Prostate gland (tissue), 2 donors: ENCODE measurements at regions of chr9 and their contacts with region 1.

Region 1: DNA sequence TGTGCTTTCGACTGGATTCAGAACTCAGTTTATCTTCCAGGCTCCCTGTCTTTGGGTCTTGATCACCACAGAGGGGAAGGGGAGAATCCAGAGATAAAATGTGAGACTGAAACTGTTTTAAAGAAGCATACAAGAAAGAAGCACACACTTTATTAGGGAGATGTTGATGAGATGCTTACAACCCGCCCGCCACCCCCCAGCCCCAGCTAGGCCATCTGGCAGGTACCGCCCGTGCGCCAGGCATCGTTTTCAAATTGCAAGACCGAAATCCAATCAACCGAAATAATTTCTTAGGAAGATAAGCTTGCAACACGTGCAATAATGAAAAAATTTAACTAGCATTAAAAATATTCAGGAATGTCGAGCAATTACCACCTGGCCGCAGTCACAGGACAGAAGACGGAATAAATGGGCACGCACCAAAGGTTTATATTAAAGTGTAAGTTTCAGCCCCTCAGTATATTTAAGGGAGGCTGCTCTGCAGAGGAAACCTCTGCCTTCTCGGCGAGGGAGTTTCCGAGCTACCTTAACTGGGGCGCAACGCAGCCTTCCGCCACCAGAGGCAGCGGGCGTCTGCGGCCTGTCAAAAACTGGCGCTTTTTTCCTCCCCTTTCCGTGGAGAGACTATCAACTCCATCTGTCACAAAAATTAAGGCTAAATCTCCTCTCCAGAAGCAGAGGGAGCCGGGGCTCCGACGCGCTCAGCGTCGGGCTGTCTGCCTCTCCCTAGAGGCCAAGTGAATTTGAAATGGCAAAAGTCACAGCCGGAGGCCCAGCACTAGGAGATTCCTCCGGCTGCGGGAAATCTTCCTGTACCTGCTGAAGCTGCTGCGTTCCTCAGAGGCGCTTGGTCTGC is 996 bp upstream of the GAS1 start:
- DNase-seq: peak; percentile 77
- H3K4me3 ChIP-seq: peak overlapping the region; percentile 71 to 80
- H3K27ac ChIP-seq: peak overlapping the region; percentile 76 to 95
- H3K4me1 ChIP-seq: peaks cover 5% of the 10 kb centered on the region
- H3K27me3 ChIP-seq: no peaks in the 10 kb centered on the region
- CTCF ChIP-seq: peak; percentile 68 to 86 (median 80)
- POLR2A ChIP-seq: no peak

Region 2: DNA sequence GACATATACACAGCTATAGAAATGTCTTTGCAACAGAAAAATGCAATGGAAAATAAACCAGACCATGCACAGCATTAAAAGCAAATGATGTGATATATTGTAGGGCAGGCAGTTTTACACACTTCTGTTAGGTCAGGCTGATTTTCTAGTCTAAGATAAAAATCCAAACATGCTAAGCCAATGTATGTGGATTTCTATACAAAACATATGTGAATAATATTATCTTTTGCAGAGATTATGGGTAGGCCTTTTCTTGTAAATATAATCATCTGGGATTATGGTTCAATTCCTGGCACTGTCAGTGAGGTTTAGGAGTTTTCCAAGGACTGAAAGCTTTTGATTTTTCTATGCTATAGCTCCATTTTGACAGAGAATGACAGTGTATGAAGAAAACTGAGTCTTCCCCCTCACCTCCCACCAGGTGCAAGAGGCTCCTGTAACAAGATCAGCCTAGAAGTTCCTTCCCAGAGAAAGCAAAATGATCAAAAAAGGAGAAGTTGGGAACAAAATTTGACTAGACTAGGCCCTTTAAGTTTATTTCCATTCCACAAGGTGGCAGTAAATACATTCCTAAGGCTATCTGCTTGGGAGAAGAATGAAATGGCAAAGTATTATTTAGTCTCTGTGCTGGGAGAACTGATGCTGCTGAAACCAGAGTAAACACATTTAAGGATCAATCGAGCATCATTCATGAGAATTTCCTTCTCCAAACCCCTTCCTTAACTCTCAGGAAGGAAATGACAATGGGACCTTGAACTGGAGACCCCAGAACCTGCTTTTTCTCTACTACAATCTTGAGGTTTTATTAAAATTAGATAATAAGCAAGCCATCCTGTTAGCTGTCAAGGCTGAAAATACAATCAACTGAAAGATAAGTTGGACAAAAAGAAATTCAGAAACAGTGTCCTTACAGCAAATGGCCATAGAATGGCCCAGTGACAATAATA is 461.1 kb before region 1 on chr9:
- intact Hi-C with region 1: loop called (anchors 2 kb)
- DNase-seq: no peak
- H3K4me3 ChIP-seq: no peak overlapping the region
- H3K27ac ChIP-seq: no peak overlapping the region
- H3K4me1 ChIP-seq: no peaks in the 10 kb centered on the region
- H3K27me3 ChIP-seq: no peaks in the 10 kb centered on the region
- CTCF ChIP-seq: peak; percentile 33 to 77 (median 68)
- POLR2A ChIP-seq: no peak

Region 3: DNA sequence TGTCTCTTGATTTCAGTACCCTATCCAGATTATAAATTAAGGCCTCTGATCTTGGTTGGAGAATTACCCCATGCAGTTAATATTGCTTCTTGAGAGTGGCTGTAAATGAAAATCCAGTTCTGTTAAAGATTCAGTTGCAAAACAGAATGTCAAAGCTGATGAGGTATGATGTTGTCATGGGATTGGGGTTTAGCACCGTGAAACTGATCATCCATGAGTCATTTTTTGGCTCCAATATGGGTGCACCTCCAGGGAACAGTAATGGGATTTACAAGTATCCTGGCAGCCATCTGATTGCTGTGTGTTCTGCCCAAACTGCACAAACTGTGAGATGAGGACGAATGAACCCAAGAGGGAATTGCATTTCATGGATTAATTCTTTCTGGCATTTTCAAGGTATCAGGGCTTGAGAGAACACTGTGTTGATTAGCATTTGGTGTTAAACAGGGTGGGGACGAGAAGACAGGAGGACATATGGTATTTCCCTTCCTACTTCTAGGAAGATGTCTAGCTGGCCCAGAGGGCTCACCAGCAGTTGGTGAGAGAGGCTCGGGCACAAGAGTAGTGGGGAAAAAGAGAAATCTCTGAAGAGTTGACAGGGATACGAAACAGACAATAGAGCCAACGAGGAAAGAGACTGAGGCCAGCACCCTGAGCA is 215.7 kb before region 1 on chr9:
- intact Hi-C with region 1: loop called (anchors 10 kb)
- DNase-seq: no peak
- H3K4me3 ChIP-seq: no peak overlapping the region
- H3K27ac ChIP-seq: no peak overlapping the region
- H3K4me1 ChIP-seq: no peaks in the 10 kb centered on the region
- H3K27me3 ChIP-seq: no peaks in the 10 kb centered on the region
- CTCF ChIP-seq: no peak
- POLR2A ChIP-seq: no peak

Region 4: DNA sequence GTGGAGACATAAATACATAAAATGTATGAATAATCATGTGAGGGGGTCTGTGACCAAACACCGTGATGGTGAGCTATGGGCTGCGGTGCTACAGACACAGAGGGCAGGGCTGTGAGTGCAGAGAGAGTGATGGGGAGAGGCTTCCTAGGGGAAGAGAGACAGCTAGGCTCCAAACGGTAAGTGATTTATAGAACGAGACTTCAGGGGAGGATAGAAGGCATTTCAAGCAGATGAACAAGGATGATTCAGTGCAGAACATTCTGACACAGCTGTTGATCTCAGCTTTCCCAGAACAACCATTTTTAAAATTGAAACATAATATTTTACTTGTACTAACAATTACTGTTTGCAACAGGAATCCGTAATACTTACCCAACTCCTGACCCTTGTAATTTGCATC is 101.6 kb before region 1 on chr9:
- intact Hi-C with region 1: no loop called
- DNase-seq: no peak
- H3K4me3 ChIP-seq: no peak overlapping the region
- H3K27ac ChIP-seq: no peak overlapping the region
- H3K4me1 ChIP-seq: no peaks in the 10 kb centered on the region
- H3K27me3 ChIP-seq: no peaks in the 10 kb centered on the region
- CTCF ChIP-seq: no peak
- POLR2A ChIP-seq: no peak

Region 5: DNA sequence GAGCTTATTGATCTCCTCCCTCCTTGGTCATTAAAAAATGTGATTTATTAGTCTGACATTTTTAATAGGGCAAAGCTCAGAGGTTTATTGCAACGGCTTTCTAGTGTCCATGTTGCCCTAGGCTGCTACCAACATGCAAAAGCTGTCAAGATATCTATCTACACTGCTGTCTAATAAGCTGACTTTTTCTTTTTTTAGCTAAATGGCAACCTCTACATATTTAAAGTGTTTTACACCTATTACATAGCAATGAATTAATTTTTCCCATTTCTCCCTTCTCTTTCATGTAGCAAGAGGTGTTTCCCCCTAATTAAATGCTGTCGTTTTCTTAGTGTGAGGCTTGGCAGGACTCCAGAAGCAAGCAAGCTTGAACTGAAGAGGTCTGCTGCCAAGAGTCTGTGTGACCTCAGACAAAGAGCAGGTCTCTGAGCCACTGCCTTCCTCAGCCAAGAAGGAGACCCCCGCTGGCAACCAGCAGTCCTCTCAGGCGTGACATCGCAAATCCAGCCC is 80.4 kb before region 1 on chr9:
- intact Hi-C with region 1: no loop called
- DNase-seq: no peak
- H3K4me3 ChIP-seq: no peak overlapping the region
- H3K27ac ChIP-seq: no peak overlapping the region
- H3K4me1 ChIP-seq: no peaks in the 10 kb centered on the region
- H3K27me3 ChIP-seq: no peaks in the 10 kb centered on the region
- CTCF ChIP-seq: no peak
- POLR2A ChIP-seq: no peak

Region 6: GRCh38 chr9:86997158-86997557 is 48.9 kb after region 1 on chr9:
- intact Hi-C with region 1: no loop called
- DNase-seq: no peak
- H3K4me3 ChIP-seq: no peak overlapping the region
- H3K27ac ChIP-seq: no peak overlapping the region
- H3K4me1 ChIP-seq: no peaks in the 10 kb centered on the region
- H3K27me3 ChIP-seq: no peaks in the 10 kb centered on the region
- CTCF ChIP-seq: peak in 2 of 4 experiments; percentile 4 to 27
- POLR2A ChIP-seq: no peak

Region 7: DNA sequence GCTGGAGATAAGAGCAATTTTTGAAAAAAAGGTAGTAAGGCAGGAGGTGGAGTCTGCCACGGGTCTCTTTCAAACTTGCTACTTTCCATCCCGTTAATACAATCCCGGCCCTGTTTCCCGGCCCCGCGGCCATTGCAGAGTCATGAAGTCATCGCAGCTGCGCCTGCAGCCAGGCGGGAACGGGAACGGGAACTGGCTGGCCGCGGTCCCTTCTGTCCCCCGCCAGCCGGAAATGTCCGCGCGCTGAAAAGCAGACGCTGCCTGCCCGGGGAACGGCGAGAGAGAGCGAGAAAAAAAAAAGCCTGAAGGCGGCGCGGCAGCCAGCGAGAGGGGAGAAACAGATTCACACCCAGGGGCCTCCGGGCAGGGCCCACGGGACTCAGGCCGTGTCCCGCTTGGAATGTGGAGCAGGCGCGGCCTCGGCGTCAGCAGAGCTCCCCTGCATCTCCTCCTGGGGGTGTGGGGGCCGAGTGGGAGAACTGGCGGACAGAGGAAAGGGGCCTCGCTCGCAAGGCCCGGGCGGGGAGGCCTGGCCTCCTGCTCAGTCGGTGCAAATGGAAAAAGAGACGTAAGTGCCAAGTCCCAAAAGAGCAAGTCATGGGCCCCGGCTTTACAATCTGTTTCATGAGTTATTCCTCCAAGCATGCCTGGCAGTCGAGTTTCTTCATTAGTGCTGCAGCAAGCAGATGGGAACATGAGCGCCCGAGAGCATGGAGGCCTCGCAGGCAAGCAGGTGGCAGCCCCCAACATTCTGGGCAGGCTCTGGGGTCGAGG is 200.2 kb after region 1 on chr9:
- intact Hi-C with region 1: loop called (anchors 2 kb)
- DNase-seq: peak; percentile 43
- H3K4me3 ChIP-seq: peak overlapping the region; percentile 24 to 28
- H3K27ac ChIP-seq: peak overlapping the region; percentile 70 to 79
- H3K4me1 ChIP-seq: peaks cover 4% of the 10 kb centered on the region
- H3K27me3 ChIP-seq: no peaks in the 10 kb centered on the region
- CTCF ChIP-seq: peak in 2 of 4 experiments; percentile 22 to 34
- POLR2A ChIP-seq: no peak

Region 8: GRCh38 chr9:87324613-87325194 is 376.4 kb after region 1 on chr9:
- intact Hi-C with region 1: loop called (anchors 2 kb)
- DNase-seq: peak; percentile 36
- H3K4me3 ChIP-seq: no peak overlapping the region
- H3K27ac ChIP-seq: no peak overlapping the region
- H3K4me1 ChIP-seq: no peaks in the 10 kb centered on the region
- H3K27me3 ChIP-seq: no peaks in the 10 kb centered on the region
- CTCF ChIP-seq: peak; percentile 31 to 87 (median 81)
- POLR2A ChIP-seq: no peak